ENCODE measurements at regions of chr6 and their contacts with region 1.

Region 1: GRCh38 chr6:35522660-35523658 is 10.3 kb upstream of the TULP1 start:
- DNase-seq: peak; percentile 46 to 87 (median 76)
- ATAC-seq: peak; percentile 86
- H3K4me3 ChIP-seq: peak overlapping the region in 1 of 2 experiments; percentile 9
- H3K4me3 Mint-ChIP-seq: peak overlapping the region; percentile 69
- H3K27ac ChIP-seq: no peak overlapping the region
- H3K27ac Mint-ChIP-seq: peak overlapping the region; percentile 64
- H3K4me1 ChIP-seq: peaks cover 19% of the 10 kb centered on the region
- H3K4me1 Mint-ChIP-seq: peaks cover 23% of the 10 kb centered on the region
- H3K27me3 ChIP-seq: no peaks in the 10 kb centered on the region
- H3K27me3 Mint-ChIP-seq: no peaks in the 10 kb centered on the region
- CTCF ChIP-seq: peak; percentile 96

Region 2: DNA sequence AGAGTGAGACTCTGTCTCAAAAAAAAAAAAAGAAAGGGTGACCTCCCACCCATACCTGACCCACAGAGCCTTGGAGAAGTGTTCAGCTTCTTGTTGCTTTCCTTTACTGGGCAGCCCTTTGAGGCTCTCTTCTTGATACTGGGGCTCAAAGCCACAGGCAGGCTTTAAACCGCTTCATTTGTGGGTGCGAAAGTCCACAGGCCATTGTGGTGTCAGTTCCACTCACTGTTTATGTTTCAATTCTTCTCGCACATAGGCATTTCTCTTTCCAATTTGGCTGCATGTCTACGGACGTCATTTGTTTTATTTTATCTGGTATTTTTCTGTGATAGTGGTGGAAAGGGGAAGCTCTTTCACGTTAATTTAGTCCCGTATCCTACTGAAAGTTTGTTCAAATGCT is 146.0 kb before region 1 on chr6:
- CTCF ChIA-PET with region 1: no interaction called
- POLR2A ChIA-PET with region 1: no interaction called
- intact Hi-C with region 1: no loop called
- DNase-seq: peak in 1 of 9 experiments; percentile 18
- ATAC-seq: no peak
- H3K4me3 ChIP-seq: no peak overlapping the region
- H3K4me3 Mint-ChIP-seq: no peak overlapping the region
- H3K27ac ChIP-seq: no peak overlapping the region
- H3K27ac Mint-ChIP-seq: no peak overlapping the region
- H3K4me1 ChIP-seq: peaks cover 7% of the 10 kb centered on the region
- H3K4me1 Mint-ChIP-seq: peaks cover 42% of the 10 kb centered on the region
- H3K27me3 ChIP-seq: no peaks in the 10 kb centered on the region
- H3K27me3 Mint-ChIP-seq: no peaks in the 10 kb centered on the region
- CTCF ChIP-seq: no peak

Region 3: DNA sequence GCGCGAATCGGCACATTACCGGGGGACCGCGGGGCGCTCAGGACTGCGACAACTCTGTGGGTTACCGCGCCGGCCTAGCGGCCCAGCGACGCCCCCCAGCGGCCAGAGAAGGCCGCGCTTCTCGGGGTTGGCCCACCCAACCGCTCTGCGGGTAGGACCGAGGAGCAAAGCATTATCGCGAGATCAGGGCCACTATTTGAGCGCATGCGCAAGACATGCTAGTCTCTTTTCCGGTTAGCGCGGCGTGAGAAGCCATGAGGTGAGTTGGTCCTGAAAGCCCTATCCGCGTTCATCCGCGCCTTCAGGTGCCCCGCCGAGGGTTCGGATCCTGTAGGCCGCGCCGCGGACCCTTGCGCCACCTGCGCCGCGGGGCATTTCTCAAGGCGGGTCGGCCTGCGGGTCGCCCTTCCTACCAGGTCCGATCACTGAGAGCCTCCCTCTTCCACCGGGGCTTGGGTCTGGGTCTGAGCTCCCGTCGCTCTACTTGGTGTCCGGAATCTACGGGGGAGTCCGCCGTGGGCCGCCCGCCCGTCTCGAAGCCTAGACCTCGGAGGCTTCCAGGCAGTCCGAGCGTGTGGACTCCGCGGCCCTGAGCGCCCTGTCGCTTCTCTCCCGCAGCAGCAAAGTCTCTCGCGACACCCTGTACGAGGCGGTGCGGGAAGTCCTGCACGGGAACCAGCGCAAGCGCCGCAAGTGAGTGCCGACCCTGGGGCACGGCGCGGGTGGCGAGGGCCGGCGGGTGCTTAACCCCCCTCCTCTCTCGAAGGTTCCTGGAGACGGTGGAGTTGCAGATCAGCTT is 54.6 kb before region 1 on chr6 and contains the start of gene RPL10A:
- CTCF ChIA-PET with region 1: interaction called, 4 read pairs
- POLR2A ChIA-PET with region 1: no interaction called
- intact Hi-C with region 1: loop called in 1 of 2 experiments (anchors 1 kb)
- DNase-seq: peak; percentile 90 to 99 (median 96)
- ATAC-seq: peak; percentile 88
- H3K4me3 ChIP-seq: peak within 1 kb of the TSS; percentile 74 to 100
- H3K4me3 Mint-ChIP-seq: peak within 1 kb of the TSS; percentile 96
- H3K27ac ChIP-seq: peak within 1 kb of the TSS; percentile 76 to 90
- H3K27ac Mint-ChIP-seq: peak within 1 kb of the TSS; percentile 99
- H3K4me1 ChIP-seq: peaks cover 26% of the 10 kb centered on the region
- H3K4me1 Mint-ChIP-seq: peaks cover 39% of the 10 kb centered on the region
- H3K27me3 ChIP-seq: no peaks in the 10 kb centered on the region
- H3K27me3 Mint-ChIP-seq: no peaks in the 10 kb centered on the region
- CTCF ChIP-seq: peak; percentile 90
- total RNA-seq, gene RPL10A: 2,275 to 2,367 TPM

Region 4: GRCh38 chr6:35510916-35511561 is 11.9 kb before region 1 on chr6:
- CTCF ChIA-PET with region 1: interaction called, 11 read pairs
- POLR2A ChIA-PET with region 1: no interaction called
- intact Hi-C with region 1: no loop called
- DNase-seq: no peak
- ATAC-seq: no peak
- H3K4me3 ChIP-seq: no peak overlapping the region
- H3K4me3 Mint-ChIP-seq: no peak overlapping the region
- H3K27ac ChIP-seq: no peak overlapping the region
- H3K27ac Mint-ChIP-seq: no peak overlapping the region
- H3K4me1 ChIP-seq: peaks cover 10% of the 10 kb centered on the region
- H3K4me1 Mint-ChIP-seq: no peaks in the 10 kb centered on the region
- H3K27me3 ChIP-seq: peaks cover 0 to 15% of the 10 kb centered on the region in 2 experiments
- H3K27me3 Mint-ChIP-seq: peaks cover 5% of the 10 kb centered on the region
- CTCF ChIP-seq: no peak

Region 5: GRCh38 chr6:35534407-35535170 is 11.6 kb after region 1 on chr6:
- CTCF ChIA-PET with region 1: interaction called, 21 read pairs
- POLR2A ChIA-PET with region 1: interaction called, 3 read pairs
- intact Hi-C with region 1: no loop called
- DNase-seq: no peak
- ATAC-seq: no peak
- H3K4me3 ChIP-seq: no peak overlapping the region
- H3K4me3 Mint-ChIP-seq: no peak overlapping the region
- H3K27ac ChIP-seq: no peak overlapping the region
- H3K27ac Mint-ChIP-seq: no peak overlapping the region
- H3K4me1 ChIP-seq: no peaks in the 10 kb centered on the region
- H3K4me1 Mint-ChIP-seq: peaks cover 7% of the 10 kb centered on the region
- H3K27me3 ChIP-seq: no peaks in the 10 kb centered on the region
- H3K27me3 Mint-ChIP-seq: peaks cover 3% of the 10 kb centered on the region
- CTCF ChIP-seq: no peak

Region 6: GRCh38 chr6:35552285-35552917 is 29.4 kb after region 1 on chr6:
- CTCF ChIA-PET with region 1: interaction called, 71 read pairs
- POLR2A ChIA-PET with region 1: interaction called, 4 read pairs
- intact Hi-C with region 1: loop called (anchors 1 kb)
- DNase-seq: peak; percentile 31 to 78 (median 61)
- ATAC-seq: peak; percentile 86
- H3K4me3 ChIP-seq: no peak overlapping the region
- H3K4me3 Mint-ChIP-seq: no peak overlapping the region
- H3K27ac ChIP-seq: no peak overlapping the region
- H3K27ac Mint-ChIP-seq: no peak overlapping the region
- H3K4me1 ChIP-seq: no peaks in the 10 kb centered on the region
- H3K4me1 Mint-ChIP-seq: peaks cover 4% of the 10 kb centered on the region
- H3K27me3 ChIP-seq: no peaks in the 10 kb centered on the region
- H3K27me3 Mint-ChIP-seq: peaks cover 2% of the 10 kb centered on the region
- CTCF ChIP-seq: peak; percentile 95

Region 7: GRCh38 chr6:35737413-35738211 is 214.7 kb after region 1 on chr6:
- CTCF ChIA-PET with region 1: interaction called, 57 read pairs
- POLR2A ChIA-PET with region 1: interaction called, 5 read pairs
- intact Hi-C with region 1: loop called in 1 of 2 experiments (anchors 1 kb)
- DNase-seq: peak in 4 of 9 experiments; percentile 22 to 83 (median 68)
- ATAC-seq: peak; percentile 72
- H3K4me3 ChIP-seq: no peak overlapping the region
- H3K4me3 Mint-ChIP-seq: no peak overlapping the region
- H3K27ac ChIP-seq: no peak overlapping the region
- H3K27ac Mint-ChIP-seq: peak overlapping the region; percentile 66
- H3K4me1 ChIP-seq: peaks cover 48% of the 10 kb centered on the region
- H3K4me1 Mint-ChIP-seq: peaks cover 42% of the 10 kb centered on the region
- H3K27me3 ChIP-seq: no peaks in the 10 kb centered on the region
- H3K27me3 Mint-ChIP-seq: peaks cover 1% of the 10 kb centered on the region
- CTCF ChIP-seq: peak; percentile 77

Region 8: DNA sequence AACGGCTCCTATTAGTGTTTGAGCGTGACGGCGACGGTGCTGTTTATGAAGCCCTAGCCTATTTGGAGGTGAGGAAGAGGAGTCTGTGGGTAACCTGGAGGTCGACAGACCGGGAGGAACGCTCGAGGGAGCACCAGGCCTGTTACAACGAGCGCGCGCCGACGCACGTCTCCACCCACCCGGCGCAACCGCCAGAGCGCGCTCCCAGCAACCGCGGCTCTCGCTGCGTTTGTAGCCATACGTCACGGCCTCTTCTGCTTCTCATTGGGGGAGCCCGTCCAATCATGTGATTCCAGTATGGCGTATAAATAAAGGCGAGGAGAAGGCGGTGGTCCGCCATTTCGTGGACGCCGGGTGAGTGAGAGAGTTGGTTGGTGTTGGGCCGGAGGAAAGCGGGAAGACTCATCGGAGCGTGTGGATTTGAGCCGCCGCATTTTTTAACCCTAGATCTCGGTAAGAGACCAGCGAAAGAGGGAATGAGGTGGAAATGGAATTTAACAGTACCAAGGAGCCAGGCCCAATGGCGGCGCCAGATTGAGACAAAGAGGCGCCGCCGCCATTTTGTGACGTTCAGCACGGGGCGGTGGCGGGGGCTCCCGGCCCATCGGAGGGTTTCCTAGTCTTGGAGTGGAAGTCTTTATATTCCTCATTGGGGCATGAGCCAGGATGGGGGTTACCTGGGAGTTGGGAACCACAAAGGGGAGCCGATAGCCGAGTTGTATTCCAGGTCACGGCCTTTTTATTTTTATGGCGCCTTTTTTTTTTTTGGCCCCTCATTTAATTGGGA is 1071.3 kb after region 1 on chr6 and contains the start of gene SRSF3:
- CTCF ChIA-PET with region 1: no interaction called
- POLR2A ChIA-PET with region 1: no interaction called
- intact Hi-C with region 1: no loop called
- DNase-seq: peak; percentile 90 to 99 (median 94)
- ATAC-seq: peak; percentile 86
- H3K4me3 ChIP-seq: peak within 1 kb of the TSS; percentile 72 to 74
- H3K4me3 Mint-ChIP-seq: peak within 1 kb of the TSS; percentile 97
- H3K27ac ChIP-seq: peak within 1 kb of the TSS; percentile 93 to 95
- H3K27ac Mint-ChIP-seq: peak within 1 kb of the TSS; percentile 99
- H3K4me1 ChIP-seq: peaks cover 42% of the 10 kb centered on the region
- H3K4me1 Mint-ChIP-seq: peaks cover 45% of the 10 kb centered on the region
- H3K27me3 ChIP-seq: no peaks in the 10 kb centered on the region
- H3K27me3 Mint-ChIP-seq: no peaks in the 10 kb centered on the region
- CTCF ChIP-seq: no peak
- total RNA-seq, gene SRSF3: 620 to 627 TPM

Measured in CD8-positive, alpha-beta T cell (primary cell).